ENCODE measurements at regions of chr7 and their contacts with region 1.

Region 1: DNA sequence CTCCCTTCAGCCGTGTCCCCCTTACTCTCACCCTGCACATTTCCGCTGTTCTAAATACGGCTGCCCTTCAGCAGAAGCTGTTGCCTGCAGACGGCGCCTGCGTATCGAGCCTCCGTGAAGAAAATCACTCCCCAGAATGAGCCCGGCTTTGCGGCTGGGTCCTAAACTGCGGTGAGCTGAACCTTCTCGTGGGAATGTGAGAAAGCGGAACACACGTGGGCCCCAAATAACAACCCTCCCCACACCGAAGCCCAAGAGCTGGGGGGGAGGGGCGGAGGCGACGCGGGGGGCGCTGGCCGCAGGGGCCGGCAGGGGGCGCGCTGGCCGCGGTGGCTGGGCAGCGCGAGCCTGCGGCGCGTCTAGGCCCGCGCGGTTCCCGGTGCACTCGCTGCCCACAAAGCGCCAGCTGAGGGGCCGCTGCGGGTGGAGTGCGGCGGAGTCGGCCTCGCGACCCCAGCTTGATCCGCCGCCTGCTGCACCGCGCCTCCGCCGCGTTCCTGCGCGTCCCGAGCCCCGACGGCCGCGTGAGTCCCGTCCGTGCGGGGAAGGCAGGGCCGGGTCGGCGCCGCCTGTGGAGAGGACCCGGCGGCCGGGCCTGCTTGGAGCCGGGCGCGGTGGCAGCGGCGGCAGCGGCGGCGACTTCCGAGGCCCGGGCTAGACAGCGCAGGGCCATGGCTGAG is at the start of gene ZNF398:
- DNase-seq: peak; percentile 70 to 94 (median 79)
- ATAC-seq: peak; percentile 70
- H3K4me3 ChIP-seq: peak within 1 kb of the TSS; percentile 89
- H3K4me3 Mint-ChIP-seq: peak within 1 kb of the TSS; percentile 89
- H3K27ac ChIP-seq: peak within 1 kb of the TSS; percentile 84 to 85
- H3K27ac Mint-ChIP-seq: peak within 1 kb of the TSS; percentile 85
- H3K4me1 ChIP-seq: peaks cover 48% of the 10 kb centered on the region
- H3K4me1 Mint-ChIP-seq: peaks cover 47% of the 10 kb centered on the region
- H3K27me3 ChIP-seq: no peaks in the 10 kb centered on the region
- H3K27me3 Mint-ChIP-seq: no peaks in the 10 kb centered on the region
- CTCF ChIP-seq: peak; percentile 38
- total RNA-seq, gene ZNF398: 14.0 to 15.0 TPM

Region 2: GRCh38 chr7:149028346-149029109 is 118.7 kb before region 1 on chr7 and contains the start of gene PDIA4:
- CTCF ChIA-PET with region 1: interaction called, 4 read pairs
- POLR2A ChIA-PET with region 1: interaction called, 19 read pairs
- intact Hi-C with region 1: loop called in 1 of 2 experiments (anchors 5 kb)
- DNase-seq: peak; percentile 96 to 100 (median 99)
- ATAC-seq: peak; percentile 88
- H3K4me3 ChIP-seq: peak within 1 kb of the TSS; percentile 87
- H3K4me3 Mint-ChIP-seq: peak within 1 kb of the TSS; percentile 90
- H3K27ac ChIP-seq: peak within 1 kb of the TSS; percentile 70 to 71
- H3K27ac Mint-ChIP-seq: peak within 1 kb of the TSS; percentile 91
- H3K4me1 ChIP-seq: peaks cover 40% of the 10 kb centered on the region
- H3K4me1 Mint-ChIP-seq: peaks cover 54% of the 10 kb centered on the region
- H3K27me3 ChIP-seq: no peaks in the 10 kb centered on the region
- H3K27me3 Mint-ChIP-seq: no peaks in the 10 kb centered on the region
- CTCF ChIP-seq: no peak
- total RNA-seq, gene PDIA4: 19.5 to 19.9 TPM

Region 3: GRCh38 chr7:149125863-149126661 is 21.1 kb before region 1 on chr7 and contains the start of gene ZNF425:
- CTCF ChIA-PET with region 1: interaction called, 67 read pairs
- POLR2A ChIA-PET with region 1: interaction called, 108 read pairs
- intact Hi-C with region 1: loop called (anchors 1 kb)
- DNase-seq: peak; percentile 87 to 96 (median 93)
- ATAC-seq: peak; percentile 83
- H3K4me3 ChIP-seq: peak within 1 kb of the TSS; percentile 100
- H3K4me3 Mint-ChIP-seq: peak within 1 kb of the TSS; percentile 100
- H3K27ac ChIP-seq: peak within 1 kb of the TSS; percentile 79 to 80
- H3K27ac Mint-ChIP-seq: peak within 1 kb of the TSS; percentile 96
- H3K4me1 ChIP-seq: peaks cover 12% of the 10 kb centered on the region
- H3K4me1 Mint-ChIP-seq: peaks cover 24% of the 10 kb centered on the region
- H3K27me3 ChIP-seq: no peaks in the 10 kb centered on the region
- H3K27me3 Mint-ChIP-seq: no peaks in the 10 kb centered on the region
- CTCF ChIP-seq: peak; percentile 94
- total RNA-seq, gene ZNF425: 0.22 to 0.39 TPM

Region 4: GRCh38 chr7:149195180-149196150 is 48.3 kb after region 1 on chr7 and contains the start of gene ZNF282:
- CTCF ChIA-PET with region 1: interaction called, 16 read pairs
- POLR2A ChIA-PET with region 1: interaction called, 24 read pairs
- intact Hi-C with region 1: loop called in 1 of 2 experiments (anchors 2 kb)
- DNase-seq: peak; percentile 32 to 83 (median 59)
- ATAC-seq: peak; percentile 79
- H3K4me3 ChIP-seq: peak within 1 kb of the TSS; percentile 90
- H3K4me3 Mint-ChIP-seq: peak within 1 kb of the TSS; percentile 96
- H3K27ac ChIP-seq: peak within 1 kb of the TSS; percentile 16 to 47
- H3K27ac Mint-ChIP-seq: peak within 1 kb of the TSS; percentile 89
- H3K4me1 ChIP-seq: peaks cover 25% of the 10 kb centered on the region
- H3K4me1 Mint-ChIP-seq: peaks cover 36% of the 10 kb centered on the region
- H3K27me3 ChIP-seq: no peaks in the 10 kb centered on the region
- H3K27me3 Mint-ChIP-seq: no peaks in the 10 kb centered on the region
- CTCF ChIP-seq: peak; percentile 54
- total RNA-seq, gene ZNF282: 13.3 to 15.6 TPM

Region 5: DNA sequence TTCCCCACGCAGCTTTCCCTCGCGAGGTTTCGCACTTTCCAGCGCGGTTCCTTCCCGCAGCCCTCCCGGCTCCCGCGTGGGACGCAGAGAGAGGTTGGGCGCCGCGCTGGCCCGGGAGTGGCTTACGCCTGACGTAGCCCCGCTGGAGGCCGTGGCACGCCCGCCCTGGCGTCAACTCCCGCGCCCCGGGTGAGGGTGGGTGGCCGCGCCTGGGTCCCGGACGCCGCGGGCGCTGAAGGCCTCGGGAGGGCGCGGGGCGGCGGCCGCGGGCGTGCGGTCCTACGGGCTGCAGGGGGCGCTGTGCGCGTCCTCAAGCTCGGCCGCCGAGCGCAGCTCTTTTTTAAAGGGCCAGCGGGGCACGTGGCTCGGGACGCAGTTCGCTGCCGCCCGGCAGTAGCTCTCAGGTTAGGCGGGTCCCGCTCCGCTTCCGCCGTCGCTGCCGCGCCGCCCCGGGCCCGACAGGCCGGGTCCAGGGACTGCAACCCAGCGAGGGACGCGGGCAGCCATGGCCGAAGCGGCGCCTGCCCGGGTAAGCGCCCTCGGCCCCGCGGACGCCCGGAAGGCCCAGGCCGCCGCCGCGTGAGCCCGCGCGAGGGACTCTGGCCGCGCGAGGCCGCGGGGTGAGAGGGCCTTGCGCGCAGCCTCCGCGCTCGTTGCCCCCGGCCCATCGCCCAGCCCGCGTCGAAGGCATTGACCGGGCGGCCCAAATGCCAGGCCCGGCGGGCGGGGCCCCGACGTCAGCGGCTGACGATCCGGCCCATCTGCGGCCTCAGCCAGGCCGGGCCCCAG is 114.8 kb after region 1 on chr7 and contains the start of gene ZNF783:
- CTCF ChIA-PET with region 1: interaction called, 9 read pairs
- POLR2A ChIA-PET with region 1: interaction called, 22 read pairs
- intact Hi-C with region 1: loop called in 1 of 2 experiments (anchors 5 kb)
- DNase-seq: peak; percentile 75 to 97 (median 83)
- ATAC-seq: peak; percentile 91
- H3K4me3 ChIP-seq: peak within 1 kb of the TSS; percentile 56
- H3K4me3 Mint-ChIP-seq: peak within 1 kb of the TSS; percentile 89
- H3K27ac ChIP-seq: peak within 1 kb of the TSS; percentile 41 to 42
- H3K27ac Mint-ChIP-seq: peak within 1 kb of the TSS; percentile 80
- H3K4me1 ChIP-seq: peaks cover 28% of the 10 kb centered on the region
- H3K4me1 Mint-ChIP-seq: peaks cover 38% of the 10 kb centered on the region
- H3K27me3 ChIP-seq: no peaks in the 10 kb centered on the region
- H3K27me3 Mint-ChIP-seq: no peaks in the 10 kb centered on the region
- CTCF ChIP-seq: peak; percentile 57
- total RNA-seq, gene ZNF783: 27.6 to 29.0 TPM

Region 6: DNA sequence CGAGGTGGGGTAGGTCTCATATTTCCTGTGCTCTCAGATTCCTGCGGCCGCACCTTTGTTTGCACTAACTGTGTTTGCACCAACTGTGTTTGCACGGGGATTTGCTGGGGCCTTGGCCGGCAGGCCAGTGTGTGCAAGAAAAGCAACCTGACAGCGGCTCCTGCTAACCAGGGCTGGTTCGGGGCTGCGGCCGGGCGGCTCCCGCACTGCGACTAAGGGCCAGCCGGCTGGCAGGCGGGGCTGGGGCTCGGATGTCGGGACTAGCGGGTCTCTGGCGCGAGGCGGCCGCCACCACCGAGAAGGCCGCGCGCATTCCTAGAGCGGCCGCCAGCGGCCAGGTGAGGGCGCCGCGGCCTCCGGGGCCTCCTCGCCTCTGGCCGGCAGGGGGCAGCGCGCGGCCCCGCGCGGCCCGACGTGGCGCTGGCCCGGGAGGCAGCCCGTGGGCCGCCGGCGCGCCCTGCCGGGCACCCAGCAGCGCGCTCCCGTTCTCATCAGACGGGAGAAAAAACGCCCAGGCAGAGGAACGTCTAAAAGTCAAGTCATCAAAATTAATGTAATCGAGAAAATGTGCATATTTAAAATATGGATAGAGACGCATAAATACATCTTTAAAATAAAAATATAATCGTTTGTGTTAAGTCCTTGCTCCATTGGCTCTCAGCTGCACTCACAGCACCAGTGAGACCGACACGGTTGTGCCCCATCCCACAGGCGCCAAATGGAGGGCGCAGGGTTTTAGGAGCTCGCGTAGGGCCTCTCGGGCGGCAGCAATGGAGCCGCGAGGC is 275.1 kb after region 1 on chr7:
- CTCF ChIA-PET with region 1: no interaction called
- POLR2A ChIA-PET with region 1: interaction called, 7 read pairs
- intact Hi-C with region 1: loop called in 1 of 2 experiments (anchors 5 kb)
- DNase-seq: peak; percentile 33 to 93 (median 69)
- ATAC-seq: peak; percentile 92
- H3K4me3 ChIP-seq: peak overlapping the region; percentile 75
- H3K4me3 Mint-ChIP-seq: peak overlapping the region; percentile 70
- H3K27ac ChIP-seq: peak overlapping the region; percentile 16 to 76
- H3K27ac Mint-ChIP-seq: peak overlapping the region; percentile 68
- H3K4me1 ChIP-seq: peaks cover 17% of the 10 kb centered on the region
- H3K4me1 Mint-ChIP-seq: no peaks in the 10 kb centered on the region
- H3K27me3 ChIP-seq: no peaks in the 10 kb centered on the region
- H3K27me3 Mint-ChIP-seq: no peaks in the 10 kb centered on the region
- CTCF ChIP-seq: peak; percentile 29

Region 7: DNA sequence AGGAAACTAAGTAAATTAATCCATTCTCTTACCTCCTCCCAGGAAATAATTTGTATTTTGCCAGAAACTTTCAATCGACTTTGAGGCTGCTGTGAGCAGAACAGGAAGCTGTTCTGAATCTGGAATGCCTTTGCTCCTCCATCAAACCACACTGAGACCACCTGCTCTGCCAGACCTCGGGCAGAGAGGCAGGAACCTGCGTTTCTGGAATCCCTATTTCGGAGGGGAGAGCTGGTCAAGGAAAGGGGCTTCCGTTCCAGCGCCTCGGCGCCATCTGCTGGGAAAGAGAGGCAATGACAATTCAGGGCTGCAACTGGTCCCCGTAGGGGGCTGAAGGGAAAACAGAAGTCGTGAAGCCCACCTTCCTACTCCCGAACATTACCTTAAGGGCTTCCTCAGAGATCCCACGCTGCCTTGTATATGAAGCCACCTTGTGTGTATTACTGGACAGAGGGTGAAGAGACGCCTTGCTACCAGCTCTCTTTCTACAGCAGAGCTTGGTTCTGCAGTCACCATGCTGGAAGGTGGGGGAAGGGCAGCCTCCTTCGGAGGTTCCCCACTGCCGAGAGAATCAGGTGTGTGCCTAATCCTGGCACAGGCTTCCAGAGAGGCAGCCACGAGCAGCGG is 595.0 kb after region 1 on chr7:
- CTCF ChIA-PET with region 1: no interaction called
- POLR2A ChIA-PET with region 1: no interaction called
- intact Hi-C with region 1: no loop called
- DNase-seq: peak in 13 of 14 experiments; percentile 32 to 73 (median 50)
- ATAC-seq: peak; percentile 62
- H3K4me3 ChIP-seq: no peak overlapping the region
- H3K4me3 Mint-ChIP-seq: peak overlapping the region; percentile 61
- H3K27ac ChIP-seq: no peak overlapping the region
- H3K27ac Mint-ChIP-seq: no peak overlapping the region
- H3K4me1 ChIP-seq: peaks cover 12% of the 10 kb centered on the region
- H3K4me1 Mint-ChIP-seq: peaks cover 11% of the 10 kb centered on the region
- H3K27me3 ChIP-seq: peaks cover 11 to 14% of the 10 kb centered on the region in 2 experiments
- H3K27me3 Mint-ChIP-seq: peaks cover 60% of the 10 kb centered on the region
- CTCF ChIP-seq: peak; percentile 95